ENCODE measurements at regions of chr9 and their contacts with region 1.

Region 1: GRCh38 chr9:72022841-72023240 is 37.6 kb downstream of the C9orf57 start:
- DNase-seq: no peak
- ATAC-seq: no peak
- H3K4me3 Mint-ChIP-seq: no peak overlapping the region
- H3K27ac Mint-ChIP-seq: no peak overlapping the region
- H3K4me1 Mint-ChIP-seq: no peaks in the 10 kb centered on the region
- H3K27me3 Mint-ChIP-seq: no peaks in the 10 kb centered on the region
- CTCF ChIP-seq: no peak

Region 2: GRCh38 chr9:71285191-71285656 is 737.6 kb before region 1 on chr9:
- CTCF ChIA-PET with region 1: interaction called, 38 read pairs
- POLR2A ChIA-PET with region 1: no interaction called
- intact Hi-C with region 1: no loop called
- DNase-seq: no peak
- ATAC-seq: peak; percentile 61
- H3K4me3 Mint-ChIP-seq: no peak overlapping the region
- H3K27ac Mint-ChIP-seq: no peak overlapping the region
- H3K4me1 Mint-ChIP-seq: no peaks in the 10 kb centered on the region
- H3K27me3 Mint-ChIP-seq: peaks cover 2% of the 10 kb centered on the region
- CTCF ChIP-seq: no peak

Region 3: GRCh38 chr9:71725590-71726338 is 297.1 kb before region 1 on chr9:
- CTCF ChIA-PET with region 1: no interaction called
- POLR2A ChIA-PET with region 1: no interaction called
- intact Hi-C with region 1: loop called (anchors 5 kb)
- DNase-seq: no peak
- ATAC-seq: no peak
- H3K4me3 Mint-ChIP-seq: no peak overlapping the region
- H3K27ac Mint-ChIP-seq: no peak overlapping the region
- H3K4me1 Mint-ChIP-seq: no peaks in the 10 kb centered on the region
- H3K27me3 Mint-ChIP-seq: no peaks in the 10 kb centered on the region
- CTCF ChIP-seq: no peak

Region 4: DNA sequence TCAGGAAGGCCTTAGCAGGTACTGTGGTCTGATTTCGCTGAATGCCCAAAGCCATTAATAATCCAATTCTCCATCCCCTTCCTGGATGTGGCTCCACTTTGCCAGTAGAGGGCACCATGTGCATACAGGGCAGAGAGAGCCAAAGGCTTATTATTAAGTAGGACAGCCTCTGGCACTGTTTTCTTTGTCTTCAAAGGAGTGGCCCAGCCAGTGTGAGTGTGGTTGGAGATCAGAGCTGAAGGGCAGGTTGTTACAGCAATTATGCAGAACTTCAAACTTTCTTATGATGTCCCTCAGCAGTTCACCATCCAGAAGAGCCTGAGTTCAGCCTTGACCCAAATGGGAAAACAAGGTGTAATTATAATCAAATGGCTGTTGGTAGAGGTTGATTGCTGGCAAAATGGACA is 215.9 kb before region 1 on chr9:
- CTCF ChIA-PET with region 1: interaction called, 88 read pairs
- POLR2A ChIA-PET with region 1: no interaction called
- intact Hi-C with region 1: loop called (anchors 1 kb)
- DNase-seq: no peak
- ATAC-seq: peak; percentile 96
- H3K4me3 Mint-ChIP-seq: no peak overlapping the region
- H3K27ac Mint-ChIP-seq: peak overlapping the region; percentile 57
- H3K4me1 Mint-ChIP-seq: peaks cover 16% of the 10 kb centered on the region
- H3K27me3 Mint-ChIP-seq: no peaks in the 10 kb centered on the region
- CTCF ChIP-seq: peak; percentile 21

Region 5: GRCh38 chr9:71819115-71819739 is 203.6 kb before region 1 on chr9:
- CTCF ChIA-PET with region 1: interaction called, 26 read pairs
- POLR2A ChIA-PET with region 1: no interaction called
- intact Hi-C with region 1: no loop called
- DNase-seq: no peak
- ATAC-seq: no peak
- H3K4me3 Mint-ChIP-seq: no peak overlapping the region
- H3K27ac Mint-ChIP-seq: no peak overlapping the region
- H3K4me1 Mint-ChIP-seq: peaks cover 31% of the 10 kb centered on the region
- H3K27me3 Mint-ChIP-seq: no peaks in the 10 kb centered on the region
- CTCF ChIP-seq: peak; percentile 59

Region 6: DNA sequence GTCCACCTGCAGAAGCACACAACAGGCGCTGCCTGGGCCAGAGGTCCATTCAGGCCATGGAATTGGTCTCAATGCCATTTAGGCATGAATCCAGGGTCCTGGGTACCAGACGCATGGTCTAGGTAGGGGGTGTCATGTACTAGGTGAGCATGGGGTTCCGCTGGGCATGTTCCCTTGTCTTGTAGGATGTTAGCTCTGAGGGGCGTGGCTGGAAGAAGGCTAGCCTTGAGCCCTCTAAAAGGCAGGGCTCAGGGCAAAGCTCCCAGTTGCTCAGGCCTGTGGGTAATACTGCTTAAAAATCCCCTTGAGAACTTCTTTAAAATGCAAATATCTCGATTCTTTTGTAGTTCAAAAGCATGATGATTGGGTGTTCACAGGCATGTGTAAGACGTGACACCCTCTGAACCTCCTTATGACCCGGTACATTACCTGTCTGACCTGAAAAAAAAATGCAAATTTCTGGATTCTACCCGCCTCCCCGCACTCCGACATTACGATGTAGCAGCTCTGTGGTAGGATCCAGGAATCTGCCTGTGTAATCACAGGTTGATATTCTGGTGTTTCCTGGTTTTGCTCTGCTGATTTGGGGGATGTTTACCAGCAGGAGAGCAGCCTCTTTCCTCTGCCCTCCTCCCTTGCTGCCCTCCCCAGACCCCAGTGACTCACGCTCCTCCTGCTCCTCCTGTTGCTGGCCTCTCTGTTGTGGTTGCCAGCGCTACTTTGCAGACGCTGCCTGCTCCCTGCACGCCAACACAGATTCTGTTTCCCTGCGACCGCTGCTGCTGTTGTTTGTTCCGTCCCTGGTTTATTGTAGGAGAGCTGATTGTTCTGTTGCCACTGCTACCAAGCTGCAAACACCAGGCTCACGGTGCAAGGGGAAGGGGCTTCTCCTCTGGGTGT is 504.3 kb after region 1 on chr9:
- CTCF ChIA-PET with region 1: no interaction called
- POLR2A ChIA-PET with region 1: no interaction called
- intact Hi-C with region 1: no loop called
- DNase-seq: no peak
- ATAC-seq: peak; percentile 66
- H3K4me3 Mint-ChIP-seq: peak overlapping the region; percentile 56
- H3K27ac Mint-ChIP-seq: peak overlapping the region; percentile 14
- H3K4me1 Mint-ChIP-seq: peaks cover 11% of the 10 kb centered on the region
- H3K27me3 Mint-ChIP-seq: peaks cover 8% of the 10 kb centered on the region
- CTCF ChIP-seq: no peak

Measured in activated B cell treated with CpG ODN at 0.5 μM for 24 hours (primary cell).